Psoas muscle (tissue), 8 donors: ENCODE measurements at regions of chr18 and their contacts with region 1.

Region 1: DNA sequence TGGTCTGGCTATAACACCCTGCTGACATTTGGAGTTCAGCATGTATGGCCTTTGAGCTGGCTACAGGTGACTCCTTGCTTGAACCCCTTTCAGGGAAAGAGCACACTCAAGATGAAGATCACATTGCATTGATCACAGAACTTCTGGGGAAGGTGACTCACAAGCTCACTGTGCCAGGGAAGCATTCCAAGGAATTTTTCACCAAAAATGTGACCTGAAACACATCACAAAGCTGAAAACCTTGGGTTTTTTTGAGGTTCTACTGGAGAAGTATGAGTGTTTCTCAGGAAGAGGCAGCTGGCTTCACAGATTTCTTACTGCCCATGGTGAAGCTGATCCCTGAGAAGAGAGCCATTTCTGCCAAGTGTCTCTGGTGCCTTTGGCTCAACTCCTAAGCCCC is 879.0 kb downstream of the CBLN2 start:
- DNase-seq: no peak
- ATAC-seq: no peak
- H3K4me3 ChIP-seq: no peak overlapping the region
- H3K27ac ChIP-seq: no peak overlapping the region
- H3K4me1 ChIP-seq: no peaks in the 10 kb centered on the region
- H3K27me3 ChIP-seq: no peaks in the 10 kb centered on the region
- CTCF ChIP-seq: no peak

Region 2: GRCh38 chr18:71942433-71942832 is 277.3 kb after region 1 on chr18:
- intact Hi-C with region 1: no loop called
- DNase-seq: no peak
- ATAC-seq: no peak
- H3K4me3 ChIP-seq: no peak overlapping the region
- H3K27ac ChIP-seq: no peak overlapping the region
- H3K4me1 ChIP-seq: no peaks in the 10 kb centered on the region
- H3K27me3 ChIP-seq: no peaks in the 10 kb centered on the region
- CTCF ChIP-seq: no peak

Region 3: GRCh38 chr18:72634500-72634899 is 969.4 kb after region 1 on chr18:
- intact Hi-C with region 1: loop called in 1 of 2 experiments (anchors 10 kb)
- DNase-seq: no peak
- ATAC-seq: no peak
- H3K4me3 ChIP-seq: no peak overlapping the region
- H3K27ac ChIP-seq: no peak overlapping the region
- H3K4me1 ChIP-seq: no peaks in the 10 kb centered on the region
- H3K27me3 ChIP-seq: no peaks in the 10 kb centered on the region
- CTCF ChIP-seq: no peak